T-cell (primary cell): ENCODE measurements at regions of chr17 and their contacts with region 1.

Region 1: GRCh38 chr17:59753522-59754467 is 46.3 kb downstream of the VMP1 start:
- DNase-seq: peak in 14 of 35 experiments; percentile 2 to 89 (median 13)
- ATAC-seq: peak; percentile 85 to 92 (median 90)
- H3K4me3 ChIP-seq: no peak overlapping the region
- H3K4me3 Mint-ChIP-seq: peak overlapping the region; percentile 20 to 63 (median 56)
- H3K27ac ChIP-seq: peak overlapping the region; percentile 47
- H3K27ac Mint-ChIP-seq: peak overlapping the region; percentile 87 to 93
- H3K4me1 ChIP-seq: no peaks in the 10 kb centered on the region
- H3K4me1 Mint-ChIP-seq: peaks cover 18 to 47% (median 42%) of the 10 kb centered on the region in 3 donors
- H3K27me3 ChIP-seq: no peaks in the 10 kb centered on the region
- H3K27me3 Mint-ChIP-seq: no peaks in the 10 kb centered on the region

Region 2: GRCh38 chr17:59707114-59707970 is 46.5 kb before region 1 on chr17 and contains the starts of genes PTRH2 and VMP1:
- CTCF ChIA-PET with region 1: interaction called in 1 of 2 experiments, 15 read pairs
- POLR2A ChIA-PET with region 1: interaction called in 1 of 2 experiments, 5 read pairs
- DNase-seq: peak; percentile 68 to 94 (median 87)
- ATAC-seq: peak; percentile 91 to 92 (median 92)
- H3K4me3 ChIP-seq: peak within 1 kb of the TSS; percentile 63 to 88
- H3K4me3 Mint-ChIP-seq: peak within 1 kb of the TSS; percentile 96 to 97 (median 96)
- H3K27ac ChIP-seq: peak within 1 kb of the TSS; percentile 89
- H3K27ac Mint-ChIP-seq: peak within 1 kb of the TSS; percentile 97 to 100
- H3K4me1 ChIP-seq: peaks cover 16 to 33% of the 10 kb centered on the region in 2 experiments
- H3K4me1 Mint-ChIP-seq: peaks cover 67 to 93% (median 79%) of the 10 kb centered on the region in 3 donors
- H3K27me3 ChIP-seq: no peaks in the 10 kb centered on the region
- H3K27me3 Mint-ChIP-seq: no peaks in the 10 kb centered on the region
- total RNA-seq, gene PTRH2: 5.4 to 18.8 (median 15.3) TPM
- total RNA-seq, gene VMP1: 93.7 to 104 (median 97.6) TPM

Region 3: GRCh38 chr17:59837308-59838051 is 83.7 kb after region 1 on chr17:
- CTCF ChIA-PET with region 1: interaction called in 1 of 2 experiments, 37 read pairs
- POLR2A ChIA-PET with region 1: interaction called in 1 of 2 experiments, 10 read pairs
- DNase-seq: peak in 31 of 35 experiments; percentile 14 to 90 (median 61)
- ATAC-seq: peak; percentile 87 to 93 (median 92)
- H3K4me3 ChIP-seq: peak overlapping the region in 1 of 2 donors; percentile 69
- H3K4me3 Mint-ChIP-seq: peak overlapping the region; percentile 98 to 100 (median 99)
- H3K27ac ChIP-seq: peak overlapping the region; percentile 87
- H3K27ac Mint-ChIP-seq: peak overlapping the region; percentile 99 to 100
- H3K4me1 ChIP-seq: peaks cover 0 to 16% of the 10 kb centered on the region in 2 experiments
- H3K4me1 Mint-ChIP-seq: peaks cover 56 to 58% (median 57%) of the 10 kb centered on the region in 3 donors
- H3K27me3 ChIP-seq: no peaks in the 10 kb centered on the region
- H3K27me3 Mint-ChIP-seq: no peaks in the 10 kb centered on the region

Region 4: DNA sequence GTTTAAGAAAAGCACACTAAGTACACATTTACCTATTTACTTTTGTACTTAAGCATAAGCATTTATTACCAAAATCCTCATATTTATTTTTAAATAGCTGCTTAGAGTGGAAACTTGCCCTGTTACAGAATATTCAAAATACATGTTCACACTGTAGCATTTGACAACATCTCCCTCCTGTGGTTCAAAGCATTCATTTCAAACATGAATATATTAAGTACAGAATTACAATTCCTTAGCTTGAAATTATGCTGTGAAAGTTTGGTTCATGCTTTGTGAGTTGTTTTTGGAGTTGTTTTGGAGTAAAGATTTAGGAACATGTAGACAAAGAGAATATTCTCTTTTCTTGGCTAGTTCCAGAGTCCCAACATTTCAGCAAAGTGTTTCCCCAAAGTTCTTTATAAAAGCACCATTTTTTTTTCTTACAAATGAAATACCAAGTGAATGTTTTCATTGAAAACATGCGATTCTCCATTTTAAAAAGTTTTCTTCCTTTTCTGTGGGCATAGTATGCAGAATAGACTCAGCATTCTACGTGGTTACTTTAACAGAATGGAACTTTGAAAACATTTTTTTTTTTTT is 105.7 kb after region 1 on chr17:
- CTCF ChIA-PET with region 1: interaction called, 10 read pairs
- POLR2A ChIA-PET with region 1: interaction called, 6 to 10 read pairs
- DNase-seq: peak in 2 of 35 experiments; percentile 5 to 66
- ATAC-seq: peak; percentile 51 to 64 (median 58)
- H3K4me3 ChIP-seq: no peak overlapping the region
- H3K4me3 Mint-ChIP-seq: no peak overlapping the region
- H3K27ac ChIP-seq: no peak overlapping the region
- H3K27ac Mint-ChIP-seq: peak overlapping the region; percentile 61 to 75
- H3K4me1 ChIP-seq: no peaks in the 10 kb centered on the region
- H3K4me1 Mint-ChIP-seq: peaks cover 0 to 18% (median 6%) of the 10 kb centered on the region in 3 donors
- H3K27me3 ChIP-seq: no peaks in the 10 kb centered on the region
- H3K27me3 Mint-ChIP-seq: no peaks in the 10 kb centered on the region

Region 5: DNA sequence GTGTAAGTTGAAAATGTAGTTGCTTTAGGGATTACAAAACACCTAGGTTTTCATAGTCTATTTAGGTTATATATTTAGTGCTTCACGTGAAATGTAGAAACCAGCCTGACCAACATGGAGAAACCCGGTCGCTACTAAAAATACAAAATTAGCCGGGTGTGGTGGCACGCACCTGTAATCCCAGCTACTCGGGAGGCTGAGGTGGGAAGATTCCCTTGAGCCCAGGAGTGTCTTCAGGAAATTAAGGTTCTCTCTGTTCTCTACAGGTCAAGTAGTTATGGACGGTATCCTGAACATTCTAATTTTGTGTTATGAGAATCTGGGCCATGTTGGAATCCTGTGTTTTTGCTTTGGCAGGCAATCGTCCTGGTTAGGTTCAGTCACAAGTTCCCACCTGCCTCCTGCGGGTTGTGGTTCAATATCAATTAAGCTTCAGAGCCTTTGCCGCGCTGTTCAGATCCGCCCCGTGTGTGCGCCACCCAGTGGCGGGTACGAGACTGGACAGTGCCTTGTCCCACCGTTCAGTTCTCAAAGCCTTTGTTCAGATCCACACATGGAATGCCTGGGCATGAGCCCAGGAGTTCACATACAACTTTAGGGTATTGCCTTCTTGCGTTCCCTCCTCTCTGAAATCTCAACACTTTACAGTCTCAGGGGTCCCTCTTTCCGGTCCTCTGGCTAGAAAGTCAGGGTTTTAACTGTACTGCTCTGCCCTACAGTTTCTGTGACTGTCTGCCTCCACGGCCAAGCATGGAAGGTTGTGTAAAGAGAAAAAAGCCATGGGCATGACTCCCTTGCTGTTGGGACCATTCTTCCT is 283.2 kb after region 1 on chr17:
- CTCF ChIA-PET with region 1: interaction called in 1 of 2 experiments, 13 read pairs
- POLR2A ChIA-PET with region 1: no interaction called
- DNase-seq: peak; percentile 33 to 83 (median 63)
- ATAC-seq: peak; percentile 87 to 98 (median 92)
- H3K4me3 ChIP-seq: no peak overlapping the region
- H3K4me3 Mint-ChIP-seq: no peak overlapping the region
- H3K27ac ChIP-seq: no peak overlapping the region
- H3K27ac Mint-ChIP-seq: peak overlapping the region in 1 of 2 donors; percentile 39
- H3K4me1 ChIP-seq: peaks cover 0 to 5% of the 10 kb centered on the region in 2 experiments
- H3K4me1 Mint-ChIP-seq: peaks cover 4 to 7% (median 4%) of the 10 kb centered on the region in 3 donors
- H3K27me3 ChIP-seq: peaks cover 0 to 14% of the 10 kb centered on the region in 2 experiments
- H3K27me3 Mint-ChIP-seq: peaks cover 9 to 20% of the 10 kb centered on the region in 2 donors

Region 6: DNA sequence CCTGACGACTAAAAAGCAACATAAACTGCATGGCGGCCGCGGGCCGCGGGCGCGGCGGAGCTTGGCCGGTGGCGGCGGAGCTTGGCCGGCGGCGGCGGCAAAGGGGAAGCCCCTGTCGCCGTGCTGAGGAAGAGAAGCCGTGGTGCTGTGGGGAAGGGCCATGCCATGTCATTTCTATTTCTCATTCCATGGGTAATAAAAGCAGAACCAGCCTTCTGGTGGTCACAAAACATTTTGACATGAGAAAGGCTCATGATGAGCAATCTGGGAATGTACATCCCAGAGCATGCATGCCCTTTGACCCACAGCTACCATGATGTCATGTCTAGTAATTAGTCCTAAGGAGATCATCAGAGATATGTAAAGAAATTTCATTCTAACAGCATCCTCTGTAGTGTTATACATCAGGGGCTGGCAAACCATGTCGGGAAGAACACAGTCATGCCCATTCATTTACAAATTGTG is 348.9 kb after region 1 on chr17:
- CTCF ChIA-PET with region 1: no interaction called
- POLR2A ChIA-PET with region 1: no interaction called
- DNase-seq: peak in 17 of 35 experiments; percentile 0 to 35 (median 6)
- ATAC-seq: peak; percentile 66 to 86 (median 81)
- H3K4me3 ChIP-seq: no peak overlapping the region
- H3K4me3 Mint-ChIP-seq: peak overlapping the region; percentile 52 to 67 (median 61)
- H3K27ac ChIP-seq: no peak overlapping the region
- H3K27ac Mint-ChIP-seq: no peak overlapping the region
- H3K4me1 ChIP-seq: peaks cover 0 to 2% of the 10 kb centered on the region in 2 experiments
- H3K4me1 Mint-ChIP-seq: peaks cover 8 to 17% (median 11%) of the 10 kb centered on the region in 3 donors
- H3K27me3 ChIP-seq: peaks cover 0 to 14% of the 10 kb centered on the region in 2 experiments
- H3K27me3 Mint-ChIP-seq: peaks cover 30 to 40% of the 10 kb centered on the region in 2 donors